ENCODE measurements at regions of chr4 and their contacts with region 1.

Region 1: GRCh38 chr4:7861440-7861881 is 78.2 kb downstream of the AFAP1 start:
- DNase-seq: no peak
- H3K4me3 ChIP-seq: no peak overlapping the region
- H3K27ac ChIP-seq: no peak overlapping the region
- H3K4me1 ChIP-seq: peaks cover 11% of the 10 kb centered on the region
- H3K27me3 ChIP-seq: no peaks in the 10 kb centered on the region
- CTCF ChIP-seq: no peak
- POLR2A ChIP-seq: no peak

Region 2: DNA sequence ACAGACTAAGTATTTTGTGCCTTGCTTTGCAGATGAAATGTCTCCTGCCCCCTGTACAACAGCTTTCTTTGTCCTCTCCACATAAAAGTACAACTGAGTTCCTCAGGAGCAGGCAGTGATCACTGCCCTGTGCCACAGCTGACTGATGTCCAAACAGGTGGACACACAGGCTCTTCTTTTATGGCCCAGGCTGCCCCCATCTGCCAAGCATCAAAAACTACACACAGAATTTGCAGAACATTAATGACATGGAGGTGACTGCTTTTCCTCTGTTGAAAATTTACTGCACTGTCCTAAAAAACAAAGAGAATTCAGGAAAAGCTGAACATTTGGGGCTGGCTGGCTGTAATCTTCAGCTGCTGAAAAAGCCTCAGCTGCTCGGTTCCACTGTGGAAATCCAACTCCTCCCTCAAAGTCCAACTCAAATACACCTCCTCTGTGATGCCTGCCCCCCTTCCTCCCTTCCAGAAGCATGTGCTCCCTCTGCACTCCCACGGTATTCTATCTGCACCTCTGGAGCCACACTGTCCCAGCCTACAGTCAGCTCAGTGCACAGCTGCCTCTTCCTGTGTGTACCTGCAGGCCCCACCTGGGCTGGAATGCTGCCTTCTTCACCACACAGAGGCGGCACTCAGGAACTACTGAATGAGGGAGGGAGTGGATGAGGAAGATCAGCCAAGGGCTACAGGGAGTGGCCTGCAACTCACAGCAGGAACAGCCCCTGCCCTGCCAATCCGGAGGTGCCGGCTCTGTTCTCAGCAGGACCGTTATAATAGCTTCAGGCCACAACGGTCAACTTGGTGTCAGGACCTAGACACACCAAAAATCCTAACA is 67.9 kb after region 1 on chr4:
- intact Hi-C with region 1: loop called (anchors 10 kb)
- DNase-seq: no peak
- H3K4me3 ChIP-seq: no peak overlapping the region
- H3K27ac ChIP-seq: no peak overlapping the region
- H3K4me1 ChIP-seq: peaks cover 35% of the 10 kb centered on the region
- H3K27me3 ChIP-seq: no peaks in the 10 kb centered on the region
- CTCF ChIP-seq: no peak
- POLR2A ChIP-seq: no peak

Region 3: DNA sequence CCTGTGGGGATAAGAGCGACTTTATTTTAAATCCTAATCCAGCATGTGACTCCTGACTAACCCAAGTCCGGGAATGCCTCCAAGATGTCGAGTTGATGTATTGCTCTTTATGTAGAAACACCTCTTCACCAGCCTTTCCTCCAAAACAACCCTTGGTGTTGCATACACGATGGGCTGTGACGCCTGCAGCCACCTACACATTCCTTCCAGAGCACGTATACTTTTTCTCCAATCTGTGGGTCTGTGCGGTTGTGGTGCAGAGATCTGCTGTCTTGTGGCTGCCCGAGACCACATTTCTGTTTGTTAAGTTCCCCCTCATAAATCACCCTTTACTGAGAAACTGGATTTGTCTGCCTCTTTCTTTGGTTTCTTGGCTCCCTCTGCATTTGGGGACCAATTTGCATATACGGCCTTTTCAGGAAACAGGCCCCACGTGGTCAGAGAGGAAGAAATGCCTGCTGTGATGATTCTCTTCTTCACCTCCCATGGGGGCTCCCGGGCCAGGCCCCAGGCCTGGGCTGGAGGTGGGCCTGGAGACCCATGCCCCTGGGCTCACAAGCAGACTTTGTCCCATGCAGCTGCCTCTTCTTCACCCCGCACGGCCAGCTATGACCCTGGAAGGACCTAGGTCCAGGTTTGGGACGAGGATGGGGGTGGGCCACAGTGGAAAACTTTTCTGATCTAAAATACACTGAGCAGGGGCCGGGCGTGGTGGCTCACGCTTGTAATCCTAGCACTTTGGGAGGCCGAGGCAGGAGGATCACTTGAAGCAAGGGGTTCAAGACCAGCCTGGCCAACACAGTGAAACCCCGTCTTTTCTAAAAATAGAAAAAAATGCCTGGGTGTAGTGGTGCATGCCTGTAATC is 99.6 kb after region 1 on chr4:
- intact Hi-C with region 1: no loop called
- DNase-seq: no peak
- H3K4me3 ChIP-seq: no peak overlapping the region
- H3K27ac ChIP-seq: peak overlapping the region; percentile 85
- H3K4me1 ChIP-seq: peaks cover 39% of the 10 kb centered on the region
- H3K27me3 ChIP-seq: no peaks in the 10 kb centered on the region
- CTCF ChIP-seq: no peak
- POLR2A ChIP-seq: no peak